ENCODE measurements at regions of chr4 and their contacts with region 1.

Region 1: DNA sequence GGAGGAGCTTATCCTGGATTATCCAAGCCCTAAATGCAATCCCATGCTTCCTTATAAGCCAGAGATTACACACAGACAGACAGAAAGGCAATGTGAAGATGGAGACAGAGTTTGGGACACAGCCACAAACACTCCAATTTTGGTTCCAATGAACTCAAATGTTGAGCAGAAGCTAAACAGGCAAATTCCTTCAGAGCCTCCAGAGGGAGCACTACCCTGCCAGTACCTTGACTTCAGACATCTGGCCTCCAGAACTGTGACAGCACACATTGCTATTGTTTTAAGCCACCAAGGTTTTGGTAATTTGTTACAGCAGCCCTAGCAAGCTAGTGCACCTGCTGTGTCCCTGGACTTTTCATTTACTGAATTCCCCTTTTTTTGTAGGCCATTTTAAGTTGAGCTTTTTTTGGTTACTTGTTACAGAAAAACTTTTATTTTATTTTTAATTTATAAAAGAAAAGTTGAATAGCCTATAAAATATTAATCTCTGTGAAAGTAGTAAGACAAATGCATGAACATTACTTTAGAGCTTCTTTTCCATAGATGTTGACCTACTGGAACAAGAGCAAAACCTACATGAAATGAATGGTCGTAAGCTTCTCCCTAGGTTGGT is 33.4 kb upstream of the SRD5A3 start:
- DNase-seq: no peak
- ATAC-seq: peak; percentile 96

Region 2: GRCh38 chr4:54999003-54999402 is 313.6 kb before region 1 on chr4:
- intact Hi-C with region 1: loop called (anchors 10 kb)
- DNase-seq: no peak
- ATAC-seq: peak; percentile 67

Region 3: DNA sequence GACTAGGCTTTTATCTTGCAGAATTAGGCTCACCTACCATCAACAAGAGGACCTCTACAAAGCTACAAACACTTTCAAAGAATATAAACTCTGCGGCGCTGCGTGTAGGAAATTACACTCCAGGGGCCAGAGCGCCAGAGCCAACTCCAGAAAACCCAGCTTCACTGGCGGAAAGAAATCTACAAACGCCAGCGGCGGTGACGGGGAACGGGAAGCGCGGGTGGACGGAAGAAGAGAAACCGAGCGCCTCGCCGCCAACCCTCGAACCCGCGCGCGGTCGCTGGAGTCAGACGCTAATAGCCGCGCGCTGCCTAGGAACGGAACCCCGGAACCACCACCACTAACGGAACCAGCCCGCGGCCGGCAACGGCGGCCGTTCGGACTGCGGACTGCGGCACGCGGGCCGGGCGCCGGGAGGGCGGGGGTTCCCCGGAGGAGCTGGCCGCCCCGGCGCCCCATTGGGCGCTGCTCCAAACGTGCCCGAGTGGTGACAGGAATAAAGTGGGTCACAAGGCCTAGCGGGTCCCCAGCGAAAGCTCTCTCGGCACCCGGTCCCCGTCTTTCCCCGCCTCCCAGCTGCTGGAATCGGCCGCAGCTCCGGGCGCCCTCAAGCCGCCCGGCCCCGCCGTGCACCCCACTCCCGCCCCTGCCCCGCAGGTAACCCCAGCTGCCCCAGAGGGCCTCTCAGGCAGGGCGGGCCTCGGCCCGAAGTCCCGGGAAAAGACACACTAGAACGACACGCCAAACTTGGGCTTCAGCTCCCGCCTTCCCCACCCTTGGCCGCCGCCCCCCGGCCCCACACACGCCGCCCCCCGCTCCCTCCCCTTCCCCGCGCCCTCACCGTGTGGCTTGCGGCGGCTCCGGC is 233.3 kb after region 1 on chr4:
- intact Hi-C with region 1: no loop called
- DNase-seq: peak; percentile 92
- ATAC-seq: peak; percentile 79

Measured in left ventricle myocardium superior (tissue), 1 donor.